Activated naive CD4-positive, alpha-beta T cell treated with anti-CD3 and anti-CD28 coated beads for 36 hours (primary cell): ENCODE measurements at regions of chr5 and their contacts with region 1.

Region 1: GRCh38 chr5:32283539-32284377 is 29.0 kb downstream of the MTMR12 start:
- DNase-seq: peak; percentile 46
- H3K4me3 Mint-ChIP-seq: no peak overlapping the region
- H3K27ac Mint-ChIP-seq: peak overlapping the region; percentile 37
- H3K4me1 Mint-ChIP-seq: peaks cover 41% of the 10 kb centered on the region
- H3K27me3 Mint-ChIP-seq: no peaks in the 10 kb centered on the region

Region 2: GRCh38 chr5:32004404-32004803 is 279.4 kb before region 1 on chr5:
- CTCF ChIA-PET with region 1: no interaction called
- intact Hi-C with region 1: no loop called
- DNase-seq: no peak
- H3K4me3 Mint-ChIP-seq: no peak overlapping the region
- H3K27ac Mint-ChIP-seq: no peak overlapping the region
- H3K4me1 Mint-ChIP-seq: no peaks in the 10 kb centered on the region
- H3K27me3 Mint-ChIP-seq: no peaks in the 10 kb centered on the region

Region 3: GRCh38 chr5:32027717-32028321 is 255.9 kb before region 1 on chr5:
- CTCF ChIA-PET with region 1: no interaction called
- intact Hi-C with region 1: loop called (anchors 1 kb)
- DNase-seq: no peak
- H3K4me3 Mint-ChIP-seq: no peak overlapping the region
- H3K27ac Mint-ChIP-seq: no peak overlapping the region
- H3K4me1 Mint-ChIP-seq: peaks cover 6% of the 10 kb centered on the region
- H3K27me3 Mint-ChIP-seq: no peaks in the 10 kb centered on the region

Region 4: GRCh38 chr5:32261198-32261597 is 22.6 kb before region 1 on chr5:
- CTCF ChIA-PET with region 1: interaction called, 5 read pairs
- intact Hi-C with region 1: loop called (anchors 2 kb)
- DNase-seq: peak; percentile 54
- H3K4me3 Mint-ChIP-seq: no peak overlapping the region
- H3K27ac Mint-ChIP-seq: peak overlapping the region; percentile 74
- H3K4me1 Mint-ChIP-seq: peaks cover 12% of the 10 kb centered on the region
- H3K27me3 Mint-ChIP-seq: no peaks in the 10 kb centered on the region

Region 5: GRCh38 chr5:32297181-32298058 is 13.7 kb after region 1 on chr5:
- CTCF ChIA-PET with region 1: interaction called, 3 read pairs
- intact Hi-C with region 1: loop called (anchors 1 kb)
- DNase-seq: no peak
- H3K4me3 Mint-ChIP-seq: no peak overlapping the region
- H3K27ac Mint-ChIP-seq: peak overlapping the region; percentile 27
- H3K4me1 Mint-ChIP-seq: peaks cover 28% of the 10 kb centered on the region
- H3K27me3 Mint-ChIP-seq: no peaks in the 10 kb centered on the region

Region 6: DNA sequence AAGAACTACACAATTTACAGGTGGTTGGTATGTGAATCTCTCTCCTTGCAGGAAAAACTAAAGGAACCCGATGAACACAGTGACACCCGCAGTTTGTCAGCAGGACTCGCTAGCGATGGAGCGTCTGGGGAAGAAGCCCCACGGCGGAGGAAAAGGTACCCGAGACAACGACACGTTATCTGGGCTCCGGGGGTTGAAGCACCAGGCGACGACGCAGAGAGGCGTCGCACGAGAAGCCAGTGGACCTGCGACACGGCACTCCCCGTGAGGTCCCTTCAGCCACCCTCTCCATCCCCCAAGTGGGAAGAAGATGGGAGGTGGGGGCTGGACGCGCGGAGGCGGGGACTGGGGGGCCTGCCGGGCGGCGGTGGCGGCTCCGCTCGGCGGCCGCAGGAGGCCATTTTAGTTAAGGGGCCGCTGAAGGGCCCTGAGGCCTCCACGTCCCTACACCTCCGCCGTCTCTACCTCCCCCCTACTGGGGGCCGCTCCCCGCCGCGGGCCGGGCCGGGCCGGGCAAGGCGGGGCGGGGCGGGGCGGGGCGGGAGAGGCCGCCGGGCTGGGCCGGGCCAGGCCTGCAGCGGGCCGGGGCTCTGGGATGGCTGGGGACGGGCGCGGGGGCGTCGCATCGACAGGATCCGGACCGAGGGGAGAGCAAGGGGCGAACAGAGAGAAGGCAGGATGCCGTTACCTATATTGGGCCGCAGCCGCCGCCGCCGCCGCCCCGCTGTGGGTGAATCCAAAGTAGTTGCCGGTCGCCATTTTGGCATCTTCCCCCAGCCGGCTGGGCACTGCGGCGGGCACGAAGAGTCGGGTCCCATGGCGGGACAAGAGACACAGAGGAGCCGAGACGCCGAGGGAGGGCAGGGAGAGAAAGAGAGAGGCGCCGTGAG is 160.0 kb after region 1 on chr5:
- CTCF ChIA-PET with region 1: no interaction called
- intact Hi-C with region 1: loop called (anchors 1 kb)
- DNase-seq: peak; percentile 50
- H3K4me3 Mint-ChIP-seq: peak overlapping the region; percentile 93
- H3K27ac Mint-ChIP-seq: peak overlapping the region; percentile 96
- H3K4me1 Mint-ChIP-seq: peaks cover 35% of the 10 kb centered on the region
- H3K27me3 Mint-ChIP-seq: no peaks in the 10 kb centered on the region